PC-9 (cell line): ENCODE measurements at regions of chr14 and their contacts with region 1.

Region 1: DNA sequence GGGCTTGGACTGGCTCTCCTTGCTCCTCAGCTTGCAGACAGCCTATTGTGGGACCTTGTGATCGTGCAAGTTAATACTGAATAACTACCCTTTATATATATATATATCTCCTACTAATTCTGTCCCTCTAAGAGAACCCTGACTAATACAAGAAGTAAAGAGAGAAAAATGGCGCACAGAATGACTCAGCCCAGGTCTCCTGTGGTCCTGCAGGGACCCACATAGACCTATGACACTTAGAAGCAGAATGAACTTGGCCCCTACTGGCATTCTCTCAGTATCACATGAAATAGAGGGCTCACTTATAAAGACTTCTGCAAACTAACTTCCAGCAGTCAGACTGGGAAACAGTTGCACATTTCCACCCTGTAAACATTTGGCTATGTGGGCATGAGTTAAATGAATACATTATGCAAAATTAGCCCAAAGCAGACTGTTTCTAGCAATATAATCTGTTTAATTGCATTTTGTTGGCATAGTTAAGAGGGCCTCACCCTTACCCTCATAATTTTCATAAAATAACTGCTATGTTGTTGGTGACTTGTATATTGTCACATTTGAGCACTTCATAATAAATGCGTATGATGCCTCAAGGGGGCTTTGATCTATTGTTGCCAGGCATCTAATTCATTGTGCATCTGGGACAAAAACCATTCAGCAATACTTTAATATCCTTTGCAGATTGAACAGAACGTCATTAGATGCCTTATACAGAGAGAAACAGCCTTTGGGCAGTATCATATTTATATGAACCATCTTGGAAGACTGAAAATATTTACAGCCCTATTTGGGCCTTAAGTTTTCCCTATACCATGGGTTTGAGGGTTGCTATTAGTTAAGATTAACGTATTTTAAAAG is 349.7 kb upstream of the DIO2 start:
- DNase-seq: no peak
- H3K4me3 ChIP-seq: no peak overlapping the region
- H3K27ac ChIP-seq: no peak overlapping the region
- H3K4me1 ChIP-seq: peaks cover 8% of the 10 kb centered on the region; the same call in 1 of the 2 replicates
- H3K27me3 ChIP-seq: no peaks in the 10 kb centered on the region
- CTCF ChIP-seq: no peak

Region 2: GRCh38 chr14:80080601-80081000 is 480.4 kb before region 1 on chr14:
- CTCF ChIA-PET with region 1: no interaction called
- POLR2A ChIA-PET with region 1: no interaction called
- intact Hi-C with region 1: loop called (anchors 10 kb)
- DNase-seq: no peak
- H3K4me3 ChIP-seq: no peak overlapping the region
- H3K27ac ChIP-seq: no peak overlapping the region
- H3K4me1 ChIP-seq: no peaks in the 10 kb centered on the region
- H3K27me3 ChIP-seq: no peaks in the 10 kb centered on the region
- CTCF ChIP-seq: no peak

Region 3: DNA sequence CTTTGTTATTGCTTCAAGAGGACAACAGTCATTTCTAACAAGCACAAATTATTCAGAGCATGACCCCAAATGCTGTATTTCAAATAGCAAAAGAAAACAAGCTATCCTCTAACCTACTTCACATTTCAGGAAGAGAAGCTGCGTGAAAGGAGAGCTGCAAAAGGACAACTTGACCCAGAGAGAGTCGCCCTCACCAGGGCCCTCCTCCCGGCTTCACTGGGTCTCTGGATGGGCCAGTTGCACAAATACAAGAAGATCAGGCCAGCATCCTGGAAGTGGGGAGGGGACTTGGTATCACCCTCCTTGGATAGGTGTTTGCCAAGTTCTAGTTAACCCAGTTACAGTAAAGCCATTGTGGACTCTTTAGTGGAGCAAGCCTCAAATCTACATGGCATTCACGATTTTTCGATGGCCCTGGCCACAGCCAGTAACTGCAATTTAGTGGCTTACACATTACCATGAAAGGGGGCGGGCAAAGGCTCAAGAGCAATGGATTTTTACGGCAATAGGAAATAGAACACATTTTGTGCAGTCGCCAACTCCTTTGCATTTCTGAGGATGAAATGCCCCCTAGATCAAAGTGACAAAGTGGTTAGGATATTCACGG is 182.8 kb before region 1 on chr14:
- CTCF ChIA-PET with region 1: no interaction called
- POLR2A ChIA-PET with region 1: no interaction called
- intact Hi-C with region 1: no loop called
- DNase-seq: no peak
- H3K4me3 ChIP-seq: no peak overlapping the region
- H3K27ac ChIP-seq: no peak overlapping the region
- H3K4me1 ChIP-seq: no peaks in the 10 kb centered on the region
- H3K27me3 ChIP-seq: no peaks in the 10 kb centered on the region
- CTCF ChIP-seq: no peak